Sigmoid colon (tissue), 7 donors: ENCODE measurements at regions of chr1 and their contacts with region 1.

Region 1: DNA sequence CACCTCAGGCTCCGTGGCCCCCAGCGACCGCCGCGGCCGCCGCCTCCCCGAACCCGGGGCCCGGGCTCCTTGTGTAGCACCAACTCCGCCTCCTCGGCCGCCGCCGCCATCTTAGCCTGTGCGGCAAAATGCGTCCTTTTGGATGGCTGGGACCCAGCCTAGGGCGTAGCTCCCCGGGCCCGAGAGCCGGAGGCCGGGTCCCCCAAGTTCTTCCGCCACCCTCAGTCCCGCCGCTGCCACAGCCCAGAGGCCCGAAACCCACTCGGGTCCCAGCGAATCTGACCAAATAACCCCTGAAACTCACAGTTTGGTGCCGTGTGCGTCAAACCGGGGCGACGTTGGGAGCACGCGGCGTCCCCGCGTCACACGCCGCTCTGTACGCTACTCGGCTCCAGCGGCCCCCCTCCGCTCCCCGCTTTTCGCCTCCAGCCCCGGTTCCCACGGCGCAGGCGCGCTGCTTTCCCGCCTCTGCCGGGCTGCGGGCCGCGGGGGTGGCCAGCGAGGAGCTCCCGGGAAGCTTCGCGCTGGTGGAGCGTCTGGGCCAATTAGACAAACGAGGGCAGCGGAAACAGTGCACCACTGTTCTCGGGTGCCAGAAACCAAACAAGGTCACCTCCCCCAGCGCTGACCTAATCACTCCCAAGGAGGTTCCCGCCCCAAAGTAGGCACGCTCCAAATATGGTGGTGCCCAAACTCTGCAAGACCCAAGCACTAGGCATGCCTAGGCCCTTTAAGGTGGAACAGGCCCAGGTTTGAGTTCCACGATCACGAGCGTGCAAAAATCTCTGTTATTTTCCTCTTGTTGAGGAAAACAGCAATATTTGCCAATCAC is at the start of gene ZNF644:
- DNase-seq: peak; percentile 97
- H3K4me3 ChIP-seq: peak within 1 kb of the TSS; percentile 74 to 97 (median 82)
- H3K27ac ChIP-seq: peak within 1 kb of the TSS; percentile 95 to 100 (median 100)
- H3K4me1 ChIP-seq: peaks cover 0 to 48% (median 38%) of the 10 kb centered on the region in 4 donors
- H3K27me3 ChIP-seq: no peaks in the 10 kb centered on the region
- CTCF ChIP-seq: no peak
- EP300 ChIP-seq: no peak
- POLR2A ChIP-seq: peak; percentile 47 to 69
- total RNA-seq, gene ZNF644: 55.1 to 74.2 (median 65.6) TPM

Region 2: DNA sequence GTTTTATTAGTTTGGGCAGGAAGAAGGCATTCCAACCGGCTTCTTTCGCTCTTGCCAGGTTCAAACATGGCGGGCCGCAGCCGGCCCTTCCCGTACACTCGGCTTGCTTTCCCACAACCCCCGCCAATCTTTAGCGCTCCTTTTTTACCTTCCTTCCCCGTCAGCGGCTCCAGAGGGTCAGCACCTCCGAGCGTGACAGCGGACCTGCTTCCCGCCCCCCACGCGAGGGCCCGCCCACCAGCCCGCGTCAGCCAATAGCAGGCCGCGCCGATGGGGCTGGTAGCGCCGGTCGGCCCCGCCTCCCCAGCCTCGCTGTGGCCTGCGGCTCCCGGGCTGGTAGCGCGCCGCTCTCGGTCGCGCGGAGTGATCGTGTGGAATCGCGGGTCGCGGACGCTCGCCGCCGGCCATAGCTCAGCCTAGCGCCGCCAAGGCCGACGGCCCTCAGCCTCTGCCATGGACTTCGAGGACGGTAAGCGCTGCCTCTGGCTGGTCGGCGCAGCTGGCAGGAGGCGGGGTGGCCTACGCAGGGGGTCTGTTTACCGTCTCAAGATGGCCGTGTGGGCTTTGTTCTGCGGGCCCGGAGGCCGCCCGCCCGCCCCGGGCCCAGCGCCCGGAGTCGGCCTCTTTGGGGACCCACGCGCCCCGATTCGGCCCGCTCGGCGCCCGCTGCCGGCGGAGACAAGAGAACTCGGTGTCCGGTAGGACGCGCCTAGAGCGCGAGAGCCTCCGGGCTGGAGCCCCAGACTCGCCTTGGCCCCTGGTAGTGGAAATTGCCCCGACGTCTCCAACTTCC is 1026.9 kb before region 1 on chr1 and contains the start of gene ZNF326:
- intact Hi-C with region 1: loop called (anchors 10 kb)
- DNase-seq: peak; percentile 97
- H3K4me3 ChIP-seq: peak within 1 kb of the TSS; percentile 63 to 78 (median 76)
- H3K27ac ChIP-seq: peak within 1 kb of the TSS; percentile 93 to 98 (median 95)
- H3K4me1 ChIP-seq: peaks cover 0 to 41% (median 29%) of the 10 kb centered on the region in 4 donors
- H3K27me3 ChIP-seq: no peaks in the 10 kb centered on the region
- CTCF ChIP-seq: no peak
- EP300 ChIP-seq: peak in 1 of 4 donors; percentile 6
- POLR2A ChIP-seq: peak; percentile 83 to 87
- total RNA-seq, gene ZNF326: 16.0 to 24.4 (median 18.1) TPM

Region 3: DNA sequence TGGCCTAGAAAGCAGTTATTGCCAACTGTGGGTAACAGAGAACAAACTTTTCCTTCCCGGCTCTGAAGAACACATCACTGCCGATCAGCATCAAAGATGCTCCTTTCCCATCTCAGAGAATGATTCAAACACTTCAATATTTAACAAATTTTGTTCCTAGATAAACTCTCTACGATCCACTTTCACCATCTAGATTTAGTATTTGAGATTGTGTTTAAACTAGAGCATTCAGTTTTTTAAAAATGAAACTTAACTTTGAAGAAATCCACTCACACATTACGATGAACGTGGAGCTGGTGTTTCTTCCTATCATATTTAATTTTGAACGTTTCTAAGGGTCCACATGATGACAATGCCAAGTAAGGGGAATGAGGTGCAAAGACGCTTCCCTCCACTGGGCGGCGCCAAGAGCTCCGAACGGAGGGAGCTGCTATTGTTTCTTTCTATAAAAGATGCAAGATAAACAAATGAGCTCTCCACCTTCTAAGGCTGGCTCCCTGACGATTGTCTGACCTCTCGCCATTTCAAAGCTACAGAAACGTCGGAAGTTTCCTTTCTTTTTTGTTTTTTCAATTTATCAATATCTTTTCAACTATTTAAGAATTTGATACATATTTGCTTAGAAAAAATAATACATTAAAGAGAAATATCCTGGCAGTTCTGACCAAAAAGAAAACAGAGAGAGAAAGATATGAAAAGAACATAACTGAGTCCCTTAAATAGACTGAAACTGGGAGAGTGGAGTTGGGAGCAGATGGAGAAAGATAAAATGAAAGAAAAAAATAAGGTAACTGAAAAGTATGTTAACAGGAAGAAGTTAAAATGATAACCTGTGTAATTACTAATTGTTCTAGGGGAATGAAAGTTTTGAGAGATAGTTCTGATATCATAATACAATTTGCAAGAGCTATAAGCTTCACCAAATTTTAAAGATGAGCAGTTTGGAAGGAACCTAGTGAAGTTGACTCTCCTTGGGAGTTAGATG is 300.4 kb before region 1 on chr1:
- intact Hi-C with region 1: loop called (anchors 10 kb)
- DNase-seq: no peak
- H3K4me3 ChIP-seq: no peak overlapping the region
- H3K27ac ChIP-seq: no peak overlapping the region
- H3K4me1 ChIP-seq: peaks cover 0 to 65% (median 57%) of the 10 kb centered on the region in 4 donors
- H3K27me3 ChIP-seq: peaks cover 82 to 100% (median 99%) of the 10 kb centered on the region in 3 donors
- CTCF ChIP-seq: peak in 3 of 4 experiments; percentile 25 to 52 (median 26)
- EP300 ChIP-seq: no peak
- POLR2A ChIP-seq: no peak

Region 4: DNA sequence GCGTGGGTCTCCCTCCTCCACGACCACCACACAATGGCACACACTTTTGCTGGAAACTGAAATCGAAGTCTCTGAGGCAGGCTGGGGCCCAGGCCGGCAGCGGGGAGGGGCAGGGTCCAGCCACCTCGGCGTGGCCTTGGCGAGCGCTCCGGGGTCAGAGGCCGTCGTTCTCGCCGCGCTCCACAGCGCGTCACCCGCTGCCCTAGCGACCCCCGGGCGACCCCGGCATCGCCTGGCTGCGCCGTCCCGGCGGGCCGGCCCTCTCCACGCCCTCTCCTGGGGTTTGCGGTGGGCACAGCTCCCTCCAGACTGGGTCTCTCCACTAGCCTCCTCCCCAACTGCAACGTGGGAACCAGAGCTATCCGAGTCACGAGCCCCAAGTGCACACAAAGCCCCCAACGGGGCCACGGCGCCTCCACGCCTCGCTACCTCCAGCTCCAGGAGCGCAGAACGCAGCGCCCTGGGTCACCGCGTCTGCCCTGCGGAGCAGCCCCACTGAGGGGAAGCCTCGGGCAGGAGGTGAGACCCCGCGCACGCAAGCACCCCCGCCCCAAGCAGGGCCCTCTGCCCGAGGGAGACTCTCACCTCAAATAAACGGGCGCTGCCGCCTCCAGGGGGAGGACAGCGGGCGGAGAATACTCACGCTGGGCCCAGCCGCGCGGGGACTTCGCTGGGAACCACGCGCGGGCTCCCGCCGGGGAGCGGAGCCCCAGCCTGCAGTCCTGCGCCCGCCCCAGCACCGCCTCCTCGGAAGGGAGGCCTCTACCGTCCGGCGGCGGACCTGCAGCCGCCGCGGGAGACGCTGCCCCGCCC is 170.8 kb before region 1 on chr1:
- intact Hi-C with region 1: loop called (anchors 2 kb)
- DNase-seq: peak; percentile 88
- H3K4me3 ChIP-seq: peak overlapping the region; percentile 61 to 75 (median 62)
- H3K27ac ChIP-seq: peak overlapping the region; percentile 43 to 62 (median 50)
- H3K4me1 ChIP-seq: peaks cover 0 to 18% (median 10%) of the 10 kb centered on the region in 4 donors
- H3K27me3 ChIP-seq: no peaks in the 10 kb centered on the region
- CTCF ChIP-seq: peak; percentile 7 to 91 (median 26)
- EP300 ChIP-seq: no peak
- POLR2A ChIP-seq: no peak

Region 5: DNA sequence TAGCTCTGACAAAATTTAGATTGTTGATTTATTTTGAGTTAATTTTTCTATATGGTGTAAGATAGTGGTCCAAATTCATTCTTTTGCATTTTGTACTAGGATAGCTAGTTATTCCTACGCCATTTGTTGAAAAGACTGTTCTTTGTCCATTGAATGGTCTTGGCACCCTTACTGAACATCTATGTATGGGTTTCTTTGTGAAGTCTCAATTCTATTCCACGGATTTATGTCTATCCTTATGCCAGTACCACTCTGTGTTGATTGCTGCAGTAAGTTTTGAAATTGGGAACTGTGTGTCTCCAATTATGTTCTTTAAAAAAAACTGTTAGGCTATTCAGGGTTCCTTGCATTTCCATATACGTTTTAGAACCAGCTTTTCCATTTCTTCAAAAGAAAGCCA is 145.8 kb before region 1 on chr1:
- intact Hi-C with region 1: no loop called
- DNase-seq: no peak
- H3K4me3 ChIP-seq: no peak overlapping the region
- H3K27ac ChIP-seq: no peak overlapping the region
- H3K4me1 ChIP-seq: no peaks in the 10 kb centered on the region
- H3K27me3 ChIP-seq: no peaks in the 10 kb centered on the region
- CTCF ChIP-seq: no peak
- EP300 ChIP-seq: no peak
- POLR2A ChIP-seq: no peak

Region 6: DNA sequence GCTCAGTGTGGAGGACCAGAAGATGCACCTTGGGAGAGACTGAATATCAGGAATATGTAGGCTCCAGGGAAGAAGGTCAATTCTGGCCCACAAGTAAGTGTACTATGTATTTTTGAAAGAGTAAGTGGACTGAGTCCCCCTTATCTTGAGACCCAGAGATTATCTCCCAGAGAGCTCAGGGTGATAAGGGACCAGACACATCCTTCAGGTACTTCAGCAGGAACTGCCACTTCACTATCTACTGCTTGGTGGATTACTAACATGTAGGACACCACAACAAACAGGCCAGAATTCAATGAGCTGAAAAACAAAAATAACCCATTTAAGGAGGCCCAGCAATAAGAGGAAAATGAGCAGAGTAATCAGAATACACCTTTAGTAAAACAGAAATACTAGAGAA is 119.2 kb before region 1 on chr1:
- intact Hi-C with region 1: loop called (anchors 5 kb)
- DNase-seq: no peak
- H3K4me3 ChIP-seq: no peak overlapping the region
- H3K27ac ChIP-seq: no peak overlapping the region
- H3K4me1 ChIP-seq: peaks cover 0 to 12% (median 4%) of the 10 kb centered on the region in 4 donors
- H3K27me3 ChIP-seq: no peaks in the 10 kb centered on the region
- CTCF ChIP-seq: no peak
- EP300 ChIP-seq: no peak
- POLR2A ChIP-seq: no peak

Region 7: DNA sequence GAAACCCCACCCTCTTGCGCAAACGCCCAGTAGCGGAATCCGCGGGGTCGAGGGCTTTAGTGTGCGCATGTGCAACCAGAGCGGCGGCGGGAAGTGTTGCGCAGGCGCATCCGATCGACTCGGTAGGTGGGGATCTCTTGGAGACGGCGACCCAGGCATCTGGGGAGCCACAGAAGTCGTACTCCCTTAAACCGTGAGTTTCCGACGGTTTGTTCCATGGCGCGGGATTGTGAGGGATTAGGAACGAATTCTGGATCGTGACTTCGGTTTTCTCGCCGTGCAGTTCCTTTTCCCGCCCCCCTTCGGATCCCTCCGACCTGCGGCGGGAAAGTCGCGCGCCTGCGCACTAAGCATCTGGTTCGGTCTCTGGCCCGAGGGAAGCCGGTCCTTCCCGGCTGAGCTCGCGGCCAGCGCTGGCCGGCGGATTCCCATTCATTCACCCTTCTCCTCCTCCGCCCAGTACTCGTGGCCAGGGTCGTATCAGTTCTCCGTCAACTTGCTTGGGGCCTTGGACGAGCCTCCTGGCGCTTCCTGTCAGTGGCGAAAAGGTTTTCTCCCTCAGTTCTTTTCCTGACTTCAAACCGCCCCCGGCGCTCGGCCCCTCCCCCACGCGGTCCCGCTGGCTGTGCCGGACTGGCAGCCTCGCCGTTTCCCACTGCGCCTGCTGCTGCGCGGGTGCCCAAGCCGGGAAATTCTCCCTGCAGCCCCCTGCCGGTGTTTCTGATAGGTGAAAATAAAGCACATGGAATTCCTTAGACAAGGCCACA is 479.0 kb after region 1 on chr1 and contains the start of gene CDC7:
- intact Hi-C with region 1: loop called (anchors 5 kb)
- DNase-seq: peak; percentile 97
- H3K4me3 ChIP-seq: peak within 1 kb of the TSS; percentile 57 to 77 (median 72)
- H3K27ac ChIP-seq: peak within 1 kb of the TSS; percentile 88 to 93 (median 92)
- H3K4me1 ChIP-seq: peaks cover 0 to 19% (median 16%) of the 10 kb centered on the region in 4 donors
- H3K27me3 ChIP-seq: no peaks in the 10 kb centered on the region
- CTCF ChIP-seq: no peak
- EP300 ChIP-seq: peak in 1 of 4 donors; percentile 45
- POLR2A ChIP-seq: no peak
- total RNA-seq, gene CDC7: 0.36 to 5.0 (median 2.1) TPM